ENCODE measurements at regions of chr7 and their contacts with region 1.

Region 1: DNA sequence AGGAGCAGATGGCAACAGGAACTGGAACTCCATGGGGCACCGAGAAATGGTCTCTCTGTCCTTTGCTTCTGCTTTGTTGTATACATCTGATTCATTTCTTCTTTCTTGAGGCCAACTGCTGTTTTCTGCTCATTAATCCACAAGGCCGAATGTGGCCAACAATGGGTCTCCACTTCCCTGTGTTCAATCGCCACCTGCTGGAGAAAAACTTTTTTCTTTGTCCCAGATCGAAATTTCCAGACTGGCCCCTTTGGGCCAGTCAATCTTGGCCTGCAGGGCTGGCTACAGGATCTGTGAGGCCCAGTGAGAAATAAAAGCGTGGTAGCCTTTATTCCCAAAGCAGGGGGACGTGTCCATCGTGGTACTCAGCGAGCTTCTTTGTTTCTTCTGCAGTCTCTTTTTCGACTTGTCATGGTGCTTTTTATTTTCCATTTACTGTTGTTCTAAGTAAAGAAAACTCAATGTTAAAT is 58.8 kb downstream of the PARP12 start:
- DNase-seq: peak; percentile 47
- ATAC-seq: peak; percentile 46
- H3K4me3 ChIP-seq: no peak overlapping the region
- H3K27ac ChIP-seq: no peak overlapping the region
- H3K4me1 ChIP-seq: peaks cover 0 to 13% of the 10 kb centered on the region in 2 experiments; a peak in 2 of 4 replicates
- H3K27me3 ChIP-seq: no peaks in the 10 kb centered on the region
- CTCF ChIP-seq: peak; percentile 55 to 82 (median 73); a peak in 5 of 6 replicates
- POLR2A ChIP-seq: no peak
- RAD21 ChIP-seq: peak; percentile 87

Region 2: DNA sequence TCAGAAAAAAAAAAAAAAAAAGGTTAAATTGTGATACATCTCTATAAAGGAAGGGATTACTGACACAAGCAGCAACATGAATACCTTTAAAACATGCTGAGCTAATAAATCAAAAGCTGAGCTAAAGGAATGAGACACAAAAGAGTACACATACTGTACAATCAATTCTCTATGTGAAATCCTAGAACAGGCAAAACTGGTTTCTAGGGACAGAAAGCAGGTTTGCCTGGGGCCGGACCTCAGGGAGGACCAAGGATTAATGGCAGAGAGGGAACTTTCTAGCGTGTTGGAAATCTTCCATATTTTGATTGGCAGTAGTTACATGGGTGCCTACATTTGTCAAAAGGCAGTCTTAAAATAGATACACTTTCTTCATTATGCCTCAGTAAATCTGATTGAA is 572.9 kb before region 1 on chr7:
- CTCF ChIA-PET with region 1: interaction called, 8 read pairs
- POLR2A ChIA-PET with region 1: no interaction called
- RAD21 ChIA-PET with region 1: no interaction called
- intact Hi-C with region 1: loop called (anchors 2 kb)
- DNase-seq: peak; percentile 32
- ATAC-seq: peak; percentile 23; the same call in 1 of the 2 replicates
- H3K4me3 ChIP-seq: no peak overlapping the region
- H3K27ac ChIP-seq: peak overlapping the region; percentile 53
- H3K4me1 ChIP-seq: peaks cover 13 to 30% of the 10 kb centered on the region in 2 experiments; a peak in 3 of 4 replicates
- H3K27me3 ChIP-seq: no peaks in the 10 kb centered on the region
- CTCF ChIP-seq: no peak
- POLR2A ChIP-seq: no peak
- RAD21 ChIP-seq: no peak

Region 3: GRCh38 chr7:139602143-139602722 is 401.7 kb before region 1 on chr7:
- CTCF ChIA-PET with region 1: interaction called, 19 read pairs
- POLR2A ChIA-PET with region 1: no interaction called
- RAD21 ChIA-PET with region 1: interaction called, 3 read pairs
- intact Hi-C with region 1: loop called (anchors 1 kb)
- DNase-seq: peak; percentile 15
- ATAC-seq: peak; percentile 89
- H3K4me3 ChIP-seq: no peak overlapping the region
- H3K27ac ChIP-seq: no peak overlapping the region
- H3K4me1 ChIP-seq: no peaks in the 10 kb centered on the region
- H3K27me3 ChIP-seq: no peaks in the 10 kb centered on the region
- CTCF ChIP-seq: peak; percentile 52 to 62 (median 53); a peak in 5 of 6 replicates
- POLR2A ChIP-seq: no peak
- RAD21 ChIP-seq: peak; percentile 69

Region 4: DNA sequence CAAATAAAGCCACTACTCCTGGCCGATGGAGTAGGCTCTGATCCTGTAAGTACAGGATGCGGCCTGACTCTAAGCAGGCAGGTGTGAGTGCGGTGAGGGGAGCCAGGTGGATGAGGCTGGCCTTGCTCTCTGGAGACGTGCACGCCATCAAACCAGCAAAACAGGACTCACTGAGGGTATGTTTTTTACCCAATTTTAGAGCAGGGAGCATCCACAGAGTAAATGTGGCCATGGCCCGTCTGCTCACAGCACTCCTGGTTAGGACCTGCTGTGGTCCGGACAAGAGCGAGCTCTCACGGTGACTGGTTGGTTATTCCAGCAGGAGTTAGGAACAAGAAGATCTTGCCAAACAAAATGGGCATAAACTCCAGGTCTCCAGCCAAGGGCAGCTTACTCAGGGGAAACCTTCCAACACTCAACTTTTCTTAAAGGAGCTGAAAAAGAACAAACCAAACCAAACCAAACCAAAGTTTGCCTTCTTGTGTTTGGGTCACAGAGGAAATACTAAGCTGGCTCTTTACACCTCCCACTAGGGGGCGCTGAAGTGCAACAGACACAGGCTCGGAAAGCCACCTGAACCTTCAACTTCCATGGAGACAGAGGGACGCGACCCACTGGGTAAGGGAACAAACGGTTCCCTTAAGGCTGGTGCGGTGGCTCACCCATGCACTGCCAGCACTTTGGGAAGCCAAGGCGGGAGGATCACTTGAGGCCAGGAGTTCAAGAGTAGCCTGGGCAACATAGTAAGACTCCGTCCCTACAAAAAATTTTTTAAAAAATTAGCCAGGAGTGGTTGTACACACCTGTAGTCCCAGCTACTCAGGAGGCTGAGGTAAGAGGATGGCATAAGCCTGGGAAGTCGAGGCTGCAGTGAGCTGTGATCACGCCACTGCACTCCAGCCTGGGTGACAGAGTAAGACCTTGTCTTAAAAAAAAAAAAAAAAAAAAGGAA is 358.1 kb before region 1 on chr7:
- CTCF ChIA-PET with region 1: interaction called, 55 read pairs
- POLR2A ChIA-PET with region 1: no interaction called
- RAD21 ChIA-PET with region 1: interaction called, 3 to 6 read pairs
- intact Hi-C with region 1: loop called (anchors 1 kb)
- DNase-seq: peak; percentile 63
- ATAC-seq: peak; percentile 96
- H3K4me3 ChIP-seq: no peak overlapping the region
- H3K27ac ChIP-seq: no peak overlapping the region
- H3K4me1 ChIP-seq: peaks cover 0 to 19% of the 10 kb centered on the region in 2 experiments; a peak in 1 of 4 replicates
- H3K27me3 ChIP-seq: no peaks in the 10 kb centered on the region
- CTCF ChIP-seq: peak; percentile 90 to 91 (median 91)
- POLR2A ChIP-seq: no peak
- RAD21 ChIP-seq: peak; percentile 98

Region 5: GRCh38 chr7:139915864-139916716 is 87.9 kb before region 1 on chr7:
- CTCF ChIA-PET with region 1: no interaction called
- POLR2A ChIA-PET with region 1: no interaction called
- RAD21 ChIA-PET with region 1: no interaction called
- intact Hi-C with region 1: no loop called
- DNase-seq: peak; percentile 92
- ATAC-seq: peak; percentile 92
- H3K4me3 ChIP-seq: peak overlapping the region in 1 of 2 experiments; percentile 31; a peak in 2 of 4 replicates
- H3K27ac ChIP-seq: peak overlapping the region; percentile 24
- H3K4me1 ChIP-seq: peaks cover 19 to 35% of the 10 kb centered on the region in 2 experiments
- H3K27me3 ChIP-seq: no peaks in the 10 kb centered on the region
- CTCF ChIP-seq: no peak
- POLR2A ChIP-seq: no peak
- RAD21 ChIP-seq: no peak; the same call in 1 of the 2 replicates

Region 6: GRCh38 chr7:140342727-140343514 is 339.0 kb after region 1 on chr7:
- CTCF ChIA-PET with region 1: interaction called, 6 read pairs
- POLR2A ChIA-PET with region 1: no interaction called
- RAD21 ChIA-PET with region 1: no interaction called
- intact Hi-C with region 1: loop called (anchors 1 kb)
- DNase-seq: peak; percentile 8
- ATAC-seq: peak; percentile 76
- H3K4me3 ChIP-seq: no peak overlapping the region
- H3K27ac ChIP-seq: no peak overlapping the region
- H3K4me1 ChIP-seq: no peaks in the 10 kb centered on the region
- H3K27me3 ChIP-seq: no peaks in the 10 kb centered on the region
- CTCF ChIP-seq: peak; percentile 10 to 45 (median 37); a peak in 4 of 6 replicates
- POLR2A ChIP-seq: no peak
- RAD21 ChIP-seq: peak; percentile 66

Measured in HCT116 (cell line).